B cell (primary cell): ENCODE measurements at regions of chr6 and their contacts with region 1.

Region 1: GRCh38 chr6:156933201-156934068 is 156.3 kb downstream of the ARID1B start:
- DNase-seq: no peak
- ATAC-seq: no peak
- H3K4me3 ChIP-seq: no peak overlapping the region
- H3K4me3 Mint-ChIP-seq: no peak overlapping the region
- H3K27ac ChIP-seq: peak overlapping the region in 1 of 2 donors; percentile 47
- H3K27ac Mint-ChIP-seq: peak overlapping the region; percentile 2
- H3K4me1 ChIP-seq: peaks cover 0 to 11% of the 10 kb centered on the region in 2 donors
- H3K4me1 Mint-ChIP-seq: peaks cover 71% of the 10 kb centered on the region
- H3K27me3 ChIP-seq: no peaks in the 10 kb centered on the region
- H3K27me3 Mint-ChIP-seq: no peaks in the 10 kb centered on the region
- CTCF ChIP-seq: no peak

Region 2: DNA sequence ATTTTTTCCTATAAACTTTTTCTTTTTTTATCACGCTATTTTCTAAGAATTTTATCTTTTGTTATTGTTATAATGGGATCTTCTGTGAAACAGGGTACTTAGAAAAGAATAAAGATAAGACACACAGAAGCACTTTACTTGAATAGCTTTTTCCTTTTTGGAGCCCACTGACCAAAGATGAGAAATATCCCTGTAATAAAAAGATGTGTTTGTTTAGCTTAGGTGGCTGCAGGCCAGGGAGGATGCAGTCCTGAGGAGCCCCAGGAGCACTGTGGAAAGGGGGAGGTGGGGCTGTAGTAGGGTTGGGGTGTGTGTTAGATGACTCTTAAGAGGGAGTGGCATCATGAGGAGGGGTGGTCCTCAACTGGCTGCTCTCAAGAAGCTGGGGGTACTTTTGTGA is 27.6 kb before region 1 on chr6:
- CTCF ChIA-PET with region 1: no interaction called
- POLR2A ChIA-PET with region 1: no interaction called
- intact Hi-C with region 1: no loop called
- DNase-seq: no peak
- ATAC-seq: no peak
- H3K4me3 ChIP-seq: no peak overlapping the region
- H3K4me3 Mint-ChIP-seq: no peak overlapping the region
- H3K27ac ChIP-seq: no peak overlapping the region
- H3K27ac Mint-ChIP-seq: peak overlapping the region; percentile 78
- H3K4me1 ChIP-seq: peaks cover 0 to 4% of the 10 kb centered on the region in 2 donors
- H3K4me1 Mint-ChIP-seq: peaks cover 34% of the 10 kb centered on the region
- H3K27me3 ChIP-seq: no peaks in the 10 kb centered on the region
- H3K27me3 Mint-ChIP-seq: no peaks in the 10 kb centered on the region
- CTCF ChIP-seq: no peak

Region 3: GRCh38 chr6:156917213-156917612 is 16.2 kb before region 1 on chr6:
- CTCF ChIA-PET with region 1: no interaction called
- POLR2A ChIA-PET with region 1: no interaction called
- intact Hi-C with region 1: loop called (anchors 2 kb)
- DNase-seq: peak; percentile 23
- ATAC-seq: no peak
- H3K4me3 ChIP-seq: no peak overlapping the region
- H3K4me3 Mint-ChIP-seq: peak overlapping the region; percentile 62
- H3K27ac ChIP-seq: peak overlapping the region; percentile 85 to 88
- H3K27ac Mint-ChIP-seq: peak overlapping the region; percentile 76
- H3K4me1 ChIP-seq: peaks cover 38 to 45% of the 10 kb centered on the region in 2 donors
- H3K4me1 Mint-ChIP-seq: peaks cover 67% of the 10 kb centered on the region
- H3K27me3 ChIP-seq: no peaks in the 10 kb centered on the region
- H3K27me3 Mint-ChIP-seq: no peaks in the 10 kb centered on the region
- CTCF ChIP-seq: no peak

Region 4: DNA sequence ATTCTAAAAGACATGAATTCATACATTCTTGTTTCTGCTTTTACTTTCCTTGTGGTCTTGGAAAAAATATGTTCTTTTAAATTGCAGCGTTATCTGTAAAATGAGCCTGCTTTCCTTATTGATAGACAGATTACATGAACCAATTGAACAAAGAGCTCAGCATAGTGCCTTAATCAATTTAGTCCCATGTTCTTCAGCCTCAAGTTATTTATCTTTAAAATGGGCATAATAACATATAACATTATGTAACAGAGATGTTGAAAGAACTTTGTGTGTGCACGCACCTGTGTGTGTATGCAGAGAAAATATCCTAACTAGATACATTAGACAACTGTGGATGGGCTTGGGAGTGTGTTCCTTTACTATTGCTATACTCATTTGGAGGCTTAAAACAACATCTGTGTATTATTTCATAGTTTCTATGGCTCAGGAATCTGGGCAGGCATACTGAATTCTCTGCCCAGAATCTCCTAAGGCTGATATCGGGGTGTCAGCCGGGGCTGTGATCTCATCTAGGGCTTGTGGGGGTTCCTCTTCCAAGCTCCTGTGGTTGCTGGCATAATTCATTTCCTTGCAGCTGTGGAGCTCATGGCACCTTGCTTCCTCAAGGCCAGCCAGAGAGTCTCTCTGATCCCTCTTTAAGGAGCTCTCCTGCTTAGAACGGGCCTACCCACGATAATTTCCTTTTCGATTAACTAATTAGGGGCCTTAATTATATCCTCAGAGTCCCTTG is 37.9 kb after region 1 on chr6:
- CTCF ChIA-PET with region 1: no interaction called
- POLR2A ChIA-PET with region 1: no interaction called
- intact Hi-C with region 1: loop called (anchors 5 kb)
- DNase-seq: no peak
- ATAC-seq: no peak
- H3K4me3 ChIP-seq: no peak overlapping the region
- H3K4me3 Mint-ChIP-seq: no peak overlapping the region
- H3K27ac ChIP-seq: peak overlapping the region in 1 of 2 donors; percentile 52
- H3K27ac Mint-ChIP-seq: no peak overlapping the region
- H3K4me1 ChIP-seq: peaks cover 45 to 66% of the 10 kb centered on the region in 2 donors
- H3K4me1 Mint-ChIP-seq: peaks cover 81% of the 10 kb centered on the region
- H3K27me3 ChIP-seq: no peaks in the 10 kb centered on the region
- H3K27me3 Mint-ChIP-seq: no peaks in the 10 kb centered on the region
- CTCF ChIP-seq: no peak

Region 5: GRCh38 chr6:157151989-157152388 is 218.6 kb after region 1 on chr6:
- CTCF ChIA-PET with region 1: no interaction called
- POLR2A ChIA-PET with region 1: no interaction called
- intact Hi-C with region 1: no loop called
- DNase-seq: no peak
- ATAC-seq: no peak
- H3K4me3 ChIP-seq: no peak overlapping the region
- H3K4me3 Mint-ChIP-seq: no peak overlapping the region
- H3K27ac ChIP-seq: no peak overlapping the region
- H3K27ac Mint-ChIP-seq: no peak overlapping the region
- H3K4me1 ChIP-seq: no peaks in the 10 kb centered on the region
- H3K4me1 Mint-ChIP-seq: no peaks in the 10 kb centered on the region
- H3K27me3 ChIP-seq: no peaks in the 10 kb centered on the region
- H3K27me3 Mint-ChIP-seq: no peaks in the 10 kb centered on the region
- CTCF ChIP-seq: no peak